Adrenal gland (tissue), 19 donors: ENCODE measurements at regions of chr4 and their contacts with region 1.

Region 1: DNA sequence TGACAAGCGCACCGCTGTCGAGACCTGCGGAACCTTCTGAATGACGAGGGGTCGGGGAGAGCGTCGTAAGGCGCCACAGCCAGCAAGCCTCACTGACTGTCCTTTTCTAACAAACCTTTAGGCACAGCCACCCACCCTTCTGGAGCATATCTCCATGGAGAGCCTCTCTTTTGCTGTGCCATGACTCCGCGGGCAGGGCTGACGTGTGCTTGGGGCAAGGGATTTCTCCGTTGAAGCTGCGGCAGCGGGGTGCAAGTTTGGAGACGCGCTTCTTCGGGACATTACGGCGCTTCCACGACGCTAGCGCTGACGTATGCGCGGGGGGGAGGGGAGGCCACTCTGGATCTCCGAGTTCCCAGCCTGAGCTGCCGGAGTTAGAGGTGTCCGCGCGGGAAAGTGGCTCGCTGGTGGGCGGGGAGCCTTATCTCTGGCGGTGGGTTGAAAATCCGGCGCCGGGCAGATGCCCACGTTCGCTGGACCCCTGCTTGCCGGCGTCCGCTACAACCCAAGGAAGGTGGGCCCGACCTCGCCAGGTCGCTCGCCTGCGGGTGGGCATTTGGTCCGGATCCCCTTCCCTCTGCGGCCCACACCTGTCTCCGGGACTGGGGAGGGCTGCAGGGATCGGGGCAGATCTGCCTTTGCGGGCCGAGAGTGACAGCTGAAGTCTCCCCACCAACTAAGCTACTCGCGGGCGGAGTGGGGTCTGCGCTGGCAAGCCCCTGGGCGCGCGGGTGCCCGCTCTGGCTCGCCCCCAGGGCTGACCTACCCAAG is 543 bp upstream of the SLC10A7 start:
- DNase-seq: peak; percentile 85 to 97 (median 94)
- H3K4me3 ChIP-seq: peak overlapping the region; percentile 64 to 90 (median 77)
- H3K27ac ChIP-seq: peak overlapping the region; percentile 35 to 91 (median 71)
- H3K4me1 ChIP-seq: peaks cover 12 to 19% of the 10 kb centered on the region in 2 donors
- H3K27me3 ChIP-seq: no peaks in the 10 kb centered on the region
- CTCF ChIP-seq: no peak
- POLR2A ChIP-seq: peak in 1 of 2 donors; percentile 66

Region 2: GRCh38 chr4:146342600-146343192 is 179.6 kb before region 1 on chr4:
- intact Hi-C with region 1: loop called in 1 of 2 experiments (anchors 10 kb)
- DNase-seq: peak in 5 of 7 donors; percentile 13 to 49 (median 38)
- H3K4me3 ChIP-seq: no peak overlapping the region
- H3K27ac ChIP-seq: no peak overlapping the region
- H3K4me1 ChIP-seq: peaks cover 0 to 6% of the 10 kb centered on the region in 2 donors
- H3K27me3 ChIP-seq: no peaks in the 10 kb centered on the region
- CTCF ChIP-seq: peak; percentile 27 to 74 (median 52)
- POLR2A ChIP-seq: no peak